ENCODE measurements at regions of chr10 and their contacts with region 1.

Region 1: GRCh38 chr10:17228091-17228940 is at the start of gene VIM:
- DNase-seq: peak; percentile 97
- H3K4me3 ChIP-seq: peak within 1 kb of the TSS; percentile 96
- H3K27ac ChIP-seq: peak within 1 kb of the TSS; percentile 96
- H3K4me1 ChIP-seq: peaks cover 38% of the 10 kb centered on the region
- H3K27me3 ChIP-seq: no peaks in the 10 kb centered on the region
- CTCF ChIP-seq: no peak; the same call in 1 of the 2 replicates
- total RNA-seq, gene VIM: 1,489 and 1,873 TPM in 2 replicates

Region 2: GRCh38 chr10:16891375-16892313 is 336.7 kb before region 1 on chr10:
- CTCF ChIA-PET with region 1: no interaction called
- POLR2A ChIA-PET with region 1: no interaction called
- intact Hi-C with region 1: loop called (anchors 5 kb)
- DNase-seq: peak; percentile 77
- H3K4me3 ChIP-seq: no peak overlapping the region
- H3K27ac ChIP-seq: no peak overlapping the region
- H3K4me1 ChIP-seq: peaks cover 20% of the 10 kb centered on the region
- H3K27me3 ChIP-seq: no peaks in the 10 kb centered on the region
- CTCF ChIP-seq: peak; percentile 65

Region 3: DNA sequence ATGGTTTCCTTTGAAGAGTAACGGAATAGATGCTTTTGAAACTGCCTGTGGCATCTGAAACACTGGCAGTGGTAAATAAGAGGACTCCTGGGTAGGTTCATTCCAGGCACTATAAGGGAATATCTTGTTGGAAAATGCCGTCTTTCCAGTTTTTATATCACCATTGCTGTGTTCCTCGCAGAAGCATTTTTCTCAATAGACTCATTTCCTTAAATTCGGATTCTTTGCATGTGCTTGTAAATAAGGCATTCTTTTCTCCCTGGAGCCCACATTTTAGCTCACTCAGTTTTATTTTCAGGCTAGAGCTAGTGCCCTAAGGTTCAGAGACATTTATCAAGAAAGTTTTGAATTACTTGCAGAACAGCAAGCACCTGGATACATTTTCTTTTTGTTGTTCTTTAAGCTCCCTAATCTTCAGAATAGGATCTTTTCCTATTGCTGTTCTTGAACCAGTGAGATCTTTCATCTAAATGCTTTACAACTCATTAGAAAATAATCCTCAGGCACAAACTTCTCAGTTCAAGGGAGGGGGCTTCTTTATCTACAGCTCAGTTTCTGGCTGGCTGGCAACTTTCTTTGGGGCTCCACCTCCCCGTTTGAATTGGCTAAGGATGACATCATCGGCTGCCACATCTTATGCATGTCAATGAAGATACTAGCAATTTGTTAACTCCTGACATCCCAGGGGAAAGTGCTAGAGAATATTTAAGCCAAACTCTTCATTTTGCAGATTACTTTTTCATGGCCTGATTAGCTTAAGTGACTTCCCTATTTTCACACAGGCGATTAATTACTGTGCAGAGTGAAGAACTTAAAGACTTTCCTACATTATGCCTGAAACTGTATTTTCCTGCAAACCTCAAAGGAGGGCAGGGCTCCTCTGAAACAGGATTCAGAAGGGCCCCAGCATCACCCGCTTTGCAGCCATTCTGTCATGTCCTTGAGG is 277.4 kb before region 1 on chr10:
- CTCF ChIA-PET with region 1: no interaction called
- POLR2A ChIA-PET with region 1: no interaction called
- intact Hi-C with region 1: loop called (anchors 5 kb)
- DNase-seq: peak; percentile 94
- H3K4me3 ChIP-seq: no peak overlapping the region
- H3K27ac ChIP-seq: peak overlapping the region; percentile 62
- H3K4me1 ChIP-seq: peaks cover 38% of the 10 kb centered on the region
- H3K27me3 ChIP-seq: no peaks in the 10 kb centered on the region
- CTCF ChIP-seq: no peak

Region 4: GRCh38 chr10:17029581-17030271 is 198.6 kb before region 1 on chr10:
- CTCF ChIA-PET with region 1: interaction called, 3 read pairs
- POLR2A ChIA-PET with region 1: no interaction called
- intact Hi-C with region 1: loop called (anchors 5 kb)
- DNase-seq: peak; percentile 97
- H3K4me3 ChIP-seq: peak overlapping the region; percentile 8
- H3K27ac ChIP-seq: peak overlapping the region; percentile 84
- H3K4me1 ChIP-seq: peaks cover 69% of the 10 kb centered on the region
- H3K27me3 ChIP-seq: no peaks in the 10 kb centered on the region
- CTCF ChIP-seq: no peak

Region 5: DNA sequence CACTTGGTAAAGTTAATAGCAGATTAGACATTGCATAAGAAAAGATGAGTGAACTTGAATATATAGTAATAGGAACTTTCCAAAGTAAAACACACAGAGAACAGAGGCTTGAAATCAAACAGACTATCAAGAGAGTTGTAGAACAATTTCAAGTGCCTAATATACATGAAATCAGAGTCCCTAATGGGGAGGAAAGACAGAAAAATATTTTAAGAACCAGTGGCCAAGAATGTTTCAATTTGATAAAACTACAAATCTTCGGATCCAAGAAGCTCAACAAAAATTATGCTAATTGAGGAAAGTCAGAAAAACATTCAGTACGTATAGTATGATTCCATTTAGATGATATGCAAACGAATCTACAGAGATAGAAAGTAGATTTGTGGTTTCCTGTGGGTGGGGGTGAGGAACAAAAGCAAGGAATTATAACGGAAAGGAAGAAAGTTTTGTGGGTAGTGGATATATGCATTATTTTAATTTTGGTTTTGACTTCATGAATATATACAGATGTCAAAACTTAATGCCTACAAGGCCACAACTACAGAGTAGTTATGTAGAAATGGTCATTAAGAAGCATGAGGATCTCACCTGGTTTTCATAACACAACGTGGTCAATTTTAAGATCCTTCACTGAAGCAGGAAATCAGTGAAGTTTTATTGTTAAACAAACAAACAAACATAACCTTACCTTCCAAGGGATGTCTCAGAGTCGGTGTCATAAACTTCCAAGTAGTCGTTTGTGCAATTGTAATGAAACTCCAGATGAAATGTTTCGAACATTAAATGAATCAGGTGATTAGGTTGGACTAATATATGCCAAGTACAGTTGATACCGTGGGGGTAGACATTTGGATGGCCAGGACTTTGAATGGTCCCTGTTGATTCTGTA is 160.7 kb before region 1 on chr10:
- CTCF ChIA-PET with region 1: no interaction called
- POLR2A ChIA-PET with region 1: no interaction called
- intact Hi-C with region 1: loop called (anchors 5 kb)
- DNase-seq: peak; percentile 87
- H3K4me3 ChIP-seq: peak overlapping the region; percentile 12
- H3K27ac ChIP-seq: peak overlapping the region; percentile 80
- H3K4me1 ChIP-seq: peaks cover 77% of the 10 kb centered on the region
- H3K27me3 ChIP-seq: no peaks in the 10 kb centered on the region
- CTCF ChIP-seq: no peak

Region 6: GRCh38 chr10:17200912-17201793 is 27.2 kb before region 1 on chr10 and contains the start of gene TRDMT1:
- CTCF ChIA-PET with region 1: interaction called, 4 read pairs
- POLR2A ChIA-PET with region 1: interaction called, 6 read pairs
- intact Hi-C with region 1: loop called (anchors 2 kb)
- DNase-seq: peak; percentile 96
- H3K4me3 ChIP-seq: peak within 1 kb of the TSS; percentile 58
- H3K27ac ChIP-seq: peak within 1 kb of the TSS; percentile 96
- H3K4me1 ChIP-seq: peaks cover 30% of the 10 kb centered on the region
- H3K27me3 ChIP-seq: no peaks in the 10 kb centered on the region
- CTCF ChIP-seq: 0 out of 2 replicates have a peak, but pooled peaks have one; percentile 30
- total RNA-seq, gene TRDMT1: 14.0 and 14.1 TPM in 2 replicates

Measured in A673 (cell line).